ENCODE measurements at regions of chr11 and their contacts with region 1.

Region 1: GRCh38 chr11:64887757-64888405 is 9.5 kb upstream of the EHD1 start:
- DNase-seq: peak; percentile 91
- H3K4me3 Mint-ChIP-seq: peak overlapping the region; percentile 63
- H3K27ac Mint-ChIP-seq: peak overlapping the region; percentile 77
- H3K4me1 Mint-ChIP-seq: peaks cover 65% of the 10 kb centered on the region
- H3K27me3 Mint-ChIP-seq: no peaks in the 10 kb centered on the region
- CTCF ChIP-seq: peak; percentile 98

Region 2: GRCh38 chr11:64675450-64676260 is 212.2 kb before region 1 on chr11:
- CTCF ChIA-PET with region 1: no interaction called
- intact Hi-C with region 1: no loop called
- DNase-seq: no peak
- H3K4me3 Mint-ChIP-seq: no peak overlapping the region
- H3K27ac Mint-ChIP-seq: no peak overlapping the region
- H3K4me1 Mint-ChIP-seq: peaks cover 8% of the 10 kb centered on the region
- H3K27me3 Mint-ChIP-seq: peaks cover 97% of the 10 kb centered on the region
- CTCF ChIP-seq: no peak

Region 3: DNA sequence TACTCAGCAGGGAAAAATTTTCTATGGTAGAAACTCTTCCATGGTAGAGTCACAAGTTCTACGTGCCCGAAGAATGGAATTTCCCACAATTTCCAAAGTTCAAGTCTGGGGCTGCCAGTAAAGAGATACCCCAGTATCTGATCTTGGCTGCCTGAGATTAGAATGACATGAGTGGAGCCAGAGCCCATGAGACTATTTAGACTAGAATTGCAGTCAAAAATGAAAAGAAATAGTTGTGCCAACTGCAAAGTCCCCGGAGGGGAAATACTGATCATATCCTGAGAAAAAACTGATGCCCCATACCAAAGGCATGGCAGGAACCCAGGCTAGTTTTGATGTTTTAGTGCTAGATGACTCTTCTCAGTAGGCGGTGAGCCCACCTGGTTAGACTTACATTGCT is 72.8 kb after region 1 on chr11:
- CTCF ChIA-PET with region 1: interaction called, 17 read pairs
- intact Hi-C with region 1: no loop called
- DNase-seq: no peak
- H3K4me3 Mint-ChIP-seq: no peak overlapping the region
- H3K27ac Mint-ChIP-seq: no peak overlapping the region
- H3K4me1 Mint-ChIP-seq: no peaks in the 10 kb centered on the region
- H3K27me3 Mint-ChIP-seq: no peaks in the 10 kb centered on the region
- CTCF ChIP-seq: no peak

Region 4: GRCh38 chr11:65281813-65282212 is 393.9 kb after region 1 on chr11:
- CTCF ChIA-PET with region 1: no interaction called
- intact Hi-C with region 1: no loop called
- DNase-seq: no peak
- H3K4me3 Mint-ChIP-seq: no peak overlapping the region
- H3K27ac Mint-ChIP-seq: no peak overlapping the region
- H3K4me1 Mint-ChIP-seq: peaks cover 26% of the 10 kb centered on the region
- H3K27me3 Mint-ChIP-seq: no peaks in the 10 kb centered on the region
- CTCF ChIP-seq: no peak

Measured in Calu3 (cell line).